ENCODE measurements at regions of chr10 and their contacts with region 1.

Region 1: GRCh38 chr10:28367929-28368484 is 65.1 kb upstream of the MPP7 start:
- DNase-seq: peak; percentile 85
- ATAC-seq: peak; percentile 97
- H3K4me3 Mint-ChIP-seq: peak overlapping the region; percentile 57
- H3K27ac Mint-ChIP-seq: peak overlapping the region; percentile 93
- H3K4me1 Mint-ChIP-seq: peaks cover 46% of the 10 kb centered on the region
- H3K27me3 Mint-ChIP-seq: no peaks in the 10 kb centered on the region

Region 2: DNA sequence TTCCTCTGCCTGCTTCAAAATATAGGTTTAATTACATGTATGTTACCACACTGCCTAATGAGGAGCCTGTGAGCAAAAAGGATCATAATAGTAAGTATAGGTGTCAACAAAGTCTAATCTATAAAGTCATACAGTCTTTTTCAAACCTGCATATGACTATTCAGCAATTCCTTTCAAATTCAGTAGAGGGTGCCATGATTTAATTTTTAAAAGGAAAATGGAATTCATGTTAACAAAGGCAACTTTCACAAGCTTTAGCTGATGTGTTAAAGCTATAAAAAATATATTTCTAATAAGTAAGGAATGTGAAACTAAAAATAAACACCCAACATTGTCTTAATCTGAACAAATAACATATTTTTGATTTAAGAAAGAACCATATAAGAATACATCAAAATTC is 117.2 kb before region 1 on chr10:
- CTCF ChIA-PET with region 1: interaction called, 10 read pairs
- POLR2A ChIA-PET with region 1: no interaction called
- DNase-seq: no peak
- ATAC-seq: no peak
- H3K4me3 Mint-ChIP-seq: no peak overlapping the region
- H3K27ac Mint-ChIP-seq: no peak overlapping the region
- H3K4me1 Mint-ChIP-seq: peaks cover 16% of the 10 kb centered on the region
- H3K27me3 Mint-ChIP-seq: no peaks in the 10 kb centered on the region

Region 3: GRCh38 chr10:28326516-28327490 is 41.2 kb before region 1 on chr10:
- CTCF ChIA-PET with region 1: interaction called, 71 read pairs
- POLR2A ChIA-PET with region 1: interaction called, 144 read pairs
- DNase-seq: no peak
- ATAC-seq: no peak
- H3K4me3 Mint-ChIP-seq: no peak overlapping the region
- H3K27ac Mint-ChIP-seq: no peak overlapping the region
- H3K4me1 Mint-ChIP-seq: peaks cover 36% of the 10 kb centered on the region
- H3K27me3 Mint-ChIP-seq: no peaks in the 10 kb centered on the region

Region 4: GRCh38 chr10:28334296-28334695 is 33.7 kb before region 1 on chr10:
- CTCF ChIA-PET with region 1: interaction called, 71 read pairs
- POLR2A ChIA-PET with region 1: interaction called, 144 read pairs
- DNase-seq: peak; percentile 82
- ATAC-seq: peak; percentile 70
- H3K4me3 Mint-ChIP-seq: peak overlapping the region; percentile 89
- H3K27ac Mint-ChIP-seq: peak overlapping the region; percentile 100
- H3K4me1 Mint-ChIP-seq: peaks cover 68% of the 10 kb centered on the region
- H3K27me3 Mint-ChIP-seq: no peaks in the 10 kb centered on the region

Measured in activated CD8-positive, alpha-beta T cell treated with anti-CD3 and anti-CD28 coated beads, Interleukin-2, amount 10 ng/mL, durations not matched to agents 7 days and 5 days (primary cell).